Panc1 (cell line): ENCODE measurements at regions of chr18 and their contacts with region 1.

Region 1: DNA sequence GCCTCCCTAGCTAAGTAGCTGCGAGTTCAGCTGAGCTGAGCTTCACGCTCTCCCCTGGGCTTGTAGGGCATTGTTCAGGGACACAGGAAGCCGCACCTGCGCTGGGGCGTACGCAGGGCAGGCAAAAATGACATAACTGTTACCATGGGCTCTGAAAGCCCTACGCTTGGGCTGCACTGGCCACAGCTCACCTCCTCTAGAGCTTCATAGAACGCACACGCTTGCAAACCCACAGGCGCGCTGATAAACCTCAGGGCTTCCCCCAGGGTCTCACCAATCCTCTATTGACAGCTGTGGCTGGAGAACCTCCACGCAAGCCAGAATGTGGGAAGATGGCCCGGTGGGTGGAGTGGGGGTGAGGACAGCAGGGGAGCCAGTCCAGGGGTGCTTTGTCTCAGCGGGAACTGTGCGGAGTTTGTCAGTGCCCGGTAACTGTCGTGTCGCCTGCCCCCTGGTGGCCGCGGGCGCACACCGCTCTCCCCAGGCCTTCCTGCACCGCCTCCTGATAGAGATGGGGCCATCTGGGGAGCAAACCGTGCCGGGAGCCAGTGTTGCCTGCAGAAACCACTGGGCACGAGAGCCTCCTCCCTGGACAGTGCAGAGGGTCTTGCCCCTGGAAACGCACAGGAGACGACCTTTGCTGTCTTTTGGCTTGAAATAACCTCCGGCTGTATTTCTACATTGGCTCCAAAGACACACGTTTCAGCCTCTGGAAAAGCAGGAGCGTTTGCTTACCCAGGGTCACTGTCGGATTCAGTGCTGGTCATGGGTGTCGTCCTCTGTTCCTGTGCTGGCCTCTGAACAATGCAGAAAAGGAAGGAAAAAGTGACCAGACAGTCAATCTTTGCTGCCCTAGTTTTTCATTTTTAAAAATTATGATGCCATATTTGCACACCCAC is 17.0 kb upstream of the CIDEA start:
- DNase-seq: peak; percentile 13
- ATAC-seq: peak; percentile 99
- H3K4me3 ChIP-seq: 0 out of 4 replicates have a peak overlapping the region, but pooled peaks of 1 of the 2 experiments have one; percentile 20
- H3K27ac ChIP-seq: no peak overlapping the region
- H3K4me1 ChIP-seq: no peaks in the 10 kb centered on the region
- H3K27me3 ChIP-seq: peaks cover 10% of the 10 kb centered on the region
- CTCF ChIP-seq: peak; percentile 96

Region 2: GRCh38 chr18:10604182-10604581 is 1633.0 kb before region 1 on chr18:
- CTCF ChIA-PET with region 1: no interaction called
- POLR2A ChIA-PET with region 1: no interaction called
- in situ Hi-C with region 1: no loop called
- intact Hi-C with region 1: loop called (anchors 5 kb)
- DNase-seq: no peak
- ATAC-seq: no peak
- H3K4me3 ChIP-seq: no peak overlapping the region
- H3K27ac ChIP-seq: no peak overlapping the region
- H3K4me1 ChIP-seq: no peaks in the 10 kb centered on the region
- H3K27me3 ChIP-seq: no peaks in the 10 kb centered on the region
- CTCF ChIP-seq: no peak

Region 3: DNA sequence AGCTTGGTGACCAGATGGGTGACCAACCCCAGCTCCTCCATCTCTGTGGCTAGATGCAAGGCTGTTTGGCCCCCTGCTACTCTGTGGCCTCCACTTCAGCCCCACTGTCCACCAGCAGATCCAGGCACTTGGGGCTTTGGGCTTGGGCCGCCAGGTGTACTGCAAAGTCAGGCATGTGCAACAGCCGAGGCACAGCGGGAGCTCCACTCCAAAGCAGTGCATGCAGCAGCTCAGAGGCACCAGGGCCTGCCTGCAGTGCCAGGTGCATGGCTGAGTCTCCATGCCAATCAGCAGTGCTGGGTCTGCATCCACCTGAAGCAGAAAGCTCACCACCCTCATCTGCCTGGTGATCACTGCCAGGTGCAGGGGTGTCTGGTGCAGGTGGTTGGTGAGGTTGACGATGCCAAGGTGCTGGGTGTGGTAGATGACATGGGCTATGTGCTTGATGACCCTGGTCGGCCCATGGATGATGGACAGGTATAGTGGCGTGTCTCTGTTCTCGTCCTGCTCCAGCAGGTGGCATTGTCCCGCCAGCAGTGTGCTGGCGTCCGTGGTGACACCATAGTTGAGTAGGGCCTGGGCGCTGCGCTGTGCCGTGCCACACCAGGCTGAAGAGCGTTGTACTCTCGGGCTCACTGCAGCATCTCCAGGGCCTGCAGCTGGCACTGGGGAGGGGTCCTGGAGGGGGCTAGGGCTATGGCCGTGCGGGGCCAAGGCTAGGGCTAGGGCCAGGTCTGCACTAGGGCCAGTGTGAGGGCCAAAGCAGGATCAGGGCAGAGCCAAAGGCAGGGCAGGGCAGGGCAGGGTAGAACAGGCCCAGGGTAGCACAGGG is 144.6 kb before region 1 on chr18:
- CTCF ChIA-PET with region 1: interaction called, 5 read pairs
- POLR2A ChIA-PET with region 1: no interaction called
- in situ Hi-C with region 1: no loop called
- intact Hi-C with region 1: loop called (anchors 1 kb)
- DNase-seq: no peak
- ATAC-seq: peak; percentile 96
- H3K4me3 ChIP-seq: no peak overlapping the region
- H3K27ac ChIP-seq: no peak overlapping the region
- H3K4me1 ChIP-seq: no peaks in the 10 kb centered on the region
- H3K27me3 ChIP-seq: no peaks in the 10 kb centered on the region
- CTCF ChIP-seq: peak; percentile 85